ENCODE measurements at regions of chr6 and their contacts with region 1.

Region 1: DNA sequence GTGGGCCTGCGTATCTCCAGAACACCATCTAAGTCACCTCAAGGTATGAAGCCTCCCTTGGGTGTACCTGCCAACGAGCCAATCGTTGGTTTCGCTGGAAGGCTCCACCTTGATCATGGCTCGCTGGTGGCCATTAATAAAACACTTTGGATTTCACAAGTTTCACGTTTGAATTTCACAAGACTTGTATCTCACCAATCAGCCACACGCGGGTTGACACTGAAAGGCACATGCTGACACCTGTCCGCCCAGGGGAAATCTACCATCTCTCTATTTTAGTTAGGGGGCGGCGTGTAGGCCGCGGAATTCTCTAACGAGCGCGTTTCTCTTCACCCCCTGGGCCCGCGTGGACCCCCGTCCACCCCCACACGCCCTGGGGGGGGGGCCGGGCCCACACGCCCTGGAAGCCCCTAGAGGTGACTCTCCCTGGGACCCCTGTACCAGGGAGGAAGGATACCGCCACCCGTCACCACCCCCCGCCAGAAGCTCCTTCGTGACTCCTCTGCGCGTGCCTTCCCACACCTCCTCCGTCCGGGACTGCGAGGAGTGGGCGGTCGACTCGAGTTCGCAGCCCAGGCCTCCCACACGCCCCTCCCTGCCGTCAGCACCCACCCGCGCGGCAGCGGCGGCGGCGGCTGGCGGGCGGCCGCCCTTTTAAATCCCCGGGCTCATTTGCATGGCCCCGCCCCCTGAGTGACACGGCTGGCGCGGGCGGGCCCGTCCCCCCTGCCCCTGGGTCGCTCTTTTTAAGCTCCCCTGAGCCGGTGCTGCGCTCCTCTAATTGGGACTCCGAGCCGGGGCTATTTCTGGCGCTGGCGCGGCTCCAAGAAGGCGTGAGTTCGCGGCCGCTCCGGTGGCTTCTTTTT is at the start of gene HMGA1:
- DNase-seq: peak; percentile 92
- H3K4me3 ChIP-seq: peak within 1 kb of the TSS; percentile 75 to 92 (median 85)
- H3K27ac ChIP-seq: peak within 1 kb of the TSS; percentile 96 to 99 (median 98)
- H3K4me1 ChIP-seq: peaks cover 0 to 33% (median 26%) of the 10 kb centered on the region in 4 donors
- H3K27me3 ChIP-seq: no peaks in the 10 kb centered on the region
- CTCF ChIP-seq: peak in 1 of 5 experiments; percentile 17
- EP300 ChIP-seq: no peak
- POLR2A ChIP-seq: peak; percentile 98
- total RNA-seq, gene HMGA1: 23.2 to 112 (median 63.2) TPM

Region 2: GRCh38 chr6:32843979-32844838 is 1392.2 kb before region 1 on chr6 and contains the start of gene PSMB8:
- in situ Hi-C with region 1: no loop called
- intact Hi-C with region 1: loop called (anchors 5 kb)
- DNase-seq: peak; percentile 99
- H3K4me3 ChIP-seq: peak within 1 kb of the TSS; percentile 62 to 98 (median 84)
- H3K27ac ChIP-seq: peak within 1 kb of the TSS; percentile 90 to 98 (median 98)
- H3K4me1 ChIP-seq: peaks cover 0 to 52% (median 20%) of the 10 kb centered on the region in 4 donors
- H3K27me3 ChIP-seq: no peaks in the 10 kb centered on the region
- CTCF ChIP-seq: no peak
- EP300 ChIP-seq: no peak
- POLR2A ChIP-seq: peak; percentile 97
- total RNA-seq, gene PSMB8: 9.4 to 95.2 (median 72.6) TPM

Region 3: GRCh38 chr6:34196126-34196830 is 40.1 kb before region 1 on chr6:
- in situ Hi-C with region 1: no loop called
- intact Hi-C with region 1: loop called (anchors 2 kb)
- DNase-seq: peak; percentile 89
- H3K4me3 ChIP-seq: peak overlapping the region; percentile 28 to 55 (median 42)
- H3K27ac ChIP-seq: no peak overlapping the region
- H3K4me1 ChIP-seq: peaks cover 0 to 9% (median 4%) of the 10 kb centered on the region in 4 donors
- H3K27me3 ChIP-seq: no peaks in the 10 kb centered on the region
- CTCF ChIP-seq: peak; percentile 95 to 99 (median 95)
- EP300 ChIP-seq: no peak
- POLR2A ChIP-seq: no peak

Measured in transverse colon (tissue), 4 donors.